Activated T-helper 2 cell treated with anti-CD3 and anti-CD28 coated beads, Interferon-gamma antibody, Interleukin-2, Interleukin-4, amounts not matched to agents 10 μg/mL and 5 μg/mL and 100 μg/mL, durations not matched to agents 14 hours and 24 hours and 36 hours (primary cell): ENCODE measurements at regions of chr4 and their contacts with region 1.

Region 1: DNA sequence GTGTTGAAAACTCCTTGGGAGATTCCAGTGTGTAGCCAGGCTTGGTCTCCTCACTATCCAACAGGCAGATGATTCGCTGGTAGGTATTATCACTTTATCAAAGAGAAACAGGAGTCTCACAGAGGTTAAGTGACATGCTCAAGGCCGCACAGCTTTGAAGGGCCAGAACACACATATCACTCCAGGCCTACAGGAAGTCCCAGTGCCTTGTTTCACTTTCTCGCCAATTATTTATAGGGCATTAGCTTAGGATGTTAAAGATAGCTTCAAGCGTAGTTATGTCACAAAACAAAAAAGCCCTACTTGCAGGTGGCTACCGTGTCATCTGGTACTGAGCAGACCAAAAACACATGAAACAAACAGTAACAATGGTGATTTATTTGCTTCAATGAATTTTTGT is 13.2 kb downstream of the ATP8A1 start:
- DNase-seq: no peak
- H3K4me3 Mint-ChIP-seq: no peak overlapping the region
- H3K27ac Mint-ChIP-seq: no peak overlapping the region
- H3K4me1 Mint-ChIP-seq: peaks cover 45% of the 10 kb centered on the region
- H3K27me3 Mint-ChIP-seq: no peaks in the 10 kb centered on the region

Region 2: DNA sequence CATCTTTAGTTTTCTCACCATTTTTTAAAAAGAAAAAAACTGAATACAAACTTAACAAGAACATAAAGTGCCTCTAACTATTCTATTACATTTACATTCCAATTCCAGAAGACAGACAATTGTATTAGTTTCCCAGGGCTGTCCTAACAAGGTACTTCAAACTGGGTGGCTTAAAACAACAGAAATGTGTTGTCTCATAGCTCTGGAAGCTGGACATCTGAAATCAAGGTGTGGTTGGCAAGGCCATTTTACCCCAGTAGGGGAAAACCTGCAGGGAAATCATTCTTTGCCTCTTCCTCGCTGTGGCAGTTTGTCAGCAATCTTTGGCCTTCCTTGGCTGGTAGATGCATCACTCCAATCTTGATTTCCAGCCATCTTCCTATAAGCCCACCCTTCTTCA is 746.0 kb before region 1 on chr4:
- intact Hi-C with region 1: no loop called
- DNase-seq: no peak
- H3K4me3 Mint-ChIP-seq: no peak overlapping the region
- H3K27ac Mint-ChIP-seq: no peak overlapping the region
- H3K4me1 Mint-ChIP-seq: no peaks in the 10 kb centered on the region
- H3K27me3 Mint-ChIP-seq: peaks cover 3% of the 10 kb centered on the region

Region 3: GRCh38 chr4:42555828-42556227 is 87.9 kb before region 1 on chr4:
- intact Hi-C with region 1: no loop called
- DNase-seq: no peak
- H3K4me3 Mint-ChIP-seq: no peak overlapping the region
- H3K27ac Mint-ChIP-seq: no peak overlapping the region
- H3K4me1 Mint-ChIP-seq: no peaks in the 10 kb centered on the region
- H3K27me3 Mint-ChIP-seq: no peaks in the 10 kb centered on the region

Region 4: DNA sequence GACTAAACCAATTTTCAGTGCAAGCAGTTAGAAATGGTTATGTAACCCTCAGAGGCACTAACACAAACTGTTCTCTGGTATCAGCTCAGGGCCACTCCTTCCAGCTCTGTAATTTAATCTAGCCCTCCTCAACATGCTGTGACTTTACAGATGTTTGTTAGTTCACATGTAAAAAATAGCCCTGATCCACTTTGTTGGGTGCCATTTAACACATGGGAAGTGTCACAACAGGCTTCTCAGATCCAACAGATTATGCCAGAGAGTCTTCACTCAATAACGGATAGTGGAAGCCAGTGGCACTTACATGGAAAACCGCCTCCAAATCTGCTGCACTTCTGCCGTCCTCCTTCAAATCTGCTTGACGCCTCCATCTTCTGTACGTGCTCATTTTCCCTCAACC is 38.4 kb before region 1 on chr4:
- intact Hi-C with region 1: loop called (anchors 5 kb)
- DNase-seq: no peak
- H3K4me3 Mint-ChIP-seq: no peak overlapping the region
- H3K27ac Mint-ChIP-seq: no peak overlapping the region
- H3K4me1 Mint-ChIP-seq: peaks cover 18% of the 10 kb centered on the region
- H3K27me3 Mint-ChIP-seq: no peaks in the 10 kb centered on the region